Caco-2 (cell line): ENCODE measurements at regions of chr16 and their contacts with region 1.

Region 1: DNA sequence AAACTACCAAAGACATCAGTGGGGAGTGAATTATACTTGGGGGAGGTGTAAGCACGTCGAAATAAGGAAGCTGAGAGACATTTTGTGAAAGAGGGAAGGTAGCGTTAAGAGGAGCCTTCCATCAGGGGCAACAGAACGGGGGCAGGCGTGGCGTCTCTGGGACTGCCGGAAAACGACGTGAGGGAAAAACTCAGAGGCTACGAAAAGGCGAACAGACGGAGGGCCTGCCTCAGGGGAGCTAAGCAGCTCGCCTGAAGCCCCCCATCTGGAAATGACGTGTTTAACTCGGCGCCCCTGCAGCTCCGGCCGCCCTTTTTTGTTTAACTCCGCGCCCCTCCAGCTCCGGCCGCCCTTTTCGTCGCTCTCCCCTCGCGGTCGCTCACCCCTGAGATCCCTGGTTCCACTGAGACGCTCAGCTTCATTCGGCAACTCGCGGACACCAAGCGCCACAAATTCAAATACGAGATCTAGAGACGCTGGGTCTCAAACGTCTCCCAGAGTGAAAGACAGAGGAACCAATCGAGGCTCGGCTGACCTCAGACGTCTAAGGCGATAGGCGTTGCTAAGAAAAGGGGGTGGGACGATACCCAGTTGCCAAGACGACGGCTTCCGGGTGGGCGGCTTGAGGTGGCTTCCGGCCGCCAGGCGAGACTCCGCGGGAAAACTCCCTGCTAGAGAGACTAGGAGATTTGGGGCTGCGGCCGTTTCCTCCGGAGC is 383.3 kb downstream of the ZFHX3 start:
- DNase-seq: peak; percentile 97 to 99
- H3K4me3 ChIP-seq: peak overlapping the region; percentile 88
- H3K4me3 Mint-ChIP-seq: peak overlapping the region; percentile 89
- H3K27ac Mint-ChIP-seq: peak overlapping the region; percentile 96
- H3K4me1 ChIP-seq: no peaks in the 10 kb centered on the region
- H3K4me1 Mint-ChIP-seq: no peaks in the 10 kb centered on the region
- H3K27me3 ChIP-seq: no peaks in the 10 kb centered on the region
- H3K27me3 Mint-ChIP-seq: no peaks in the 10 kb centered on the region
- CTCF ChIP-seq: no peak

Region 2: GRCh38 chr16:71781741-71782140 is 882.9 kb before region 1 on chr16:
- CTCF ChIA-PET with region 1: no interaction called
- POLR2A ChIA-PET with region 1: no interaction called
- intact Hi-C with region 1: no loop called
- DNase-seq: no peak
- H3K4me3 ChIP-seq: no peak overlapping the region
- H3K4me3 Mint-ChIP-seq: no peak overlapping the region
- H3K27ac Mint-ChIP-seq: peak overlapping the region; percentile 55
- H3K4me1 ChIP-seq: peaks cover 10% of the 10 kb centered on the region
- H3K4me1 Mint-ChIP-seq: peaks cover 10% of the 10 kb centered on the region
- H3K27me3 ChIP-seq: no peaks in the 10 kb centered on the region
- H3K27me3 Mint-ChIP-seq: no peaks in the 10 kb centered on the region
- CTCF ChIP-seq: no peak

Region 3: GRCh38 chr16:72560617-72561016 is 104.0 kb before region 1 on chr16:
- CTCF ChIA-PET with region 1: no interaction called
- POLR2A ChIA-PET with region 1: no interaction called
- intact Hi-C with region 1: loop called (anchors 10 kb)
- DNase-seq: no peak
- H3K4me3 ChIP-seq: no peak overlapping the region
- H3K4me3 Mint-ChIP-seq: no peak overlapping the region
- H3K27ac Mint-ChIP-seq: no peak overlapping the region
- H3K4me1 ChIP-seq: 0 out of 2 replicates have a peak, but pooled peaks cover 6% of the 10 kb centered on the region
- H3K4me1 Mint-ChIP-seq: no peaks in the 10 kb centered on the region
- H3K27me3 ChIP-seq: no peaks in the 10 kb centered on the region
- H3K27me3 Mint-ChIP-seq: no peaks in the 10 kb centered on the region
- CTCF ChIP-seq: no peak

Region 4: DNA sequence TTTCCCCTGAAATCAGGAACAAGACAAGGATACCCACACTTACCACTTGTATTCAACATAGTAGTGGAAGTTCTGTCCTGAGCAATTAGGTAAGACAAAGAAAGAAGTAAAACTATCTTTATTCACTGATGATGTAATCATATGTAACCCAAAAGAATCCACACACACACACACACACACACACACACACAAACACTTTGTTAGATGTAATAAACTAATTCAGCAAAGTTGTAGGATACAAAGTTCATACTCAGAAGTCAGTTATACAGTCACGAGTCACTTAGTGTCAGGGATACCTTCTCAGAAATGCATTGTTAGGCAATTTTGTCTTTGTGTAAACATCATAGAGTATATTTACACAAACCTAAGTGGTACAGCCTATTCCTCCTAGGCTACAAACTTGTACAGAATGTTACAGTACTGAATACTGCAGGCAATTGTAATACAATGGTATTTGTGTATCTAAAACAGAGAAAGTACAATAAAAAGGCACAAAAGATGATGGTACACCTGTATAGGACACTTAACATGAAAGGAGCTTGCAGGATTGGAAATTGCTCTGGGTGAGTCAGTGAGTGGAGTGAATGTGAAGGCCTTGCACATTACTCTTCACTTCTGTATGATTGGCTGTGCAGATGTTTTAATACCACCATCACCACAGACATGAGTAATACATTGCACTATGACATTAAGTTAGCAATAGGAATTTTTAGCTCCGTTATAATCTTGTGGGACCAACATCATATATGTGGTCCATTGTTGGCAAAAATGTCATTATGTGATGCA is 13.2 kb after region 1 on chr16:
- CTCF ChIA-PET with region 1: no interaction called
- POLR2A ChIA-PET with region 1: no interaction called
- intact Hi-C with region 1: no loop called
- DNase-seq: peak; percentile 46 to 67
- H3K4me3 ChIP-seq: no peak overlapping the region
- H3K4me3 Mint-ChIP-seq: no peak overlapping the region
- H3K27ac Mint-ChIP-seq: peak overlapping the region; percentile 14
- H3K4me1 ChIP-seq: peaks cover 9% of the 10 kb centered on the region
- H3K4me1 Mint-ChIP-seq: peaks cover 6% of the 10 kb centered on the region
- H3K27me3 ChIP-seq: no peaks in the 10 kb centered on the region
- H3K27me3 Mint-ChIP-seq: no peaks in the 10 kb centered on the region
- CTCF ChIP-seq: no peak

Region 5: DNA sequence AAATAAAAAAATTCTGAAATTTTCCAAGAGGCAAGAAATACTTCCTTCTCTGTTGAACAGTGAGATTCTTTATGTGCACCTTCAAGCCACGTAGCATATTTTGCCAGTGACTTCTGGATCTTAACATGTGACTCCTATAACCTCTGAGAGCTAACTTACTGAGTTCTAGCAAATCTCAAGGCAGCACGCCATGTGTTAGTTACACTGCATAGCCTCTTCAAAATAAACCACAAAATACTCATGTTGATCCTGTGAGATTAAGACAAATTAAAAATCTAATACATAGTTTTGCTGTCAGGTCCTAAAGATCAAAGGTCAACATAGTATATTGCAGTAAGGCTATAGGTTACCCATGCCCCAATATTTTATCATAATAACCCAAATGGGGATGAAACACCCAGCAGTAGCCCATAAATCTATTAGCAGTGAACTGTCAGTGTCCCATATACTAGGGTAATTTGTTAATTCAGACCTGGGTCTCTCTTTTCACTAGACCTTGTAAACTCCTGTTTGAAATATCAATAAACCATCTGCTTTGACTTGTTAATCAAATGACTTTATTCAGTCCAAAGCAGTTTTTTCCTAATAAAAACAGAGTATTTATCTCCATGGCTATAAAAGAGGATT is 40.2 kb after region 1 on chr16:
- CTCF ChIA-PET with region 1: no interaction called
- POLR2A ChIA-PET with region 1: no interaction called
- intact Hi-C with region 1: no loop called
- DNase-seq: no peak
- H3K4me3 ChIP-seq: no peak overlapping the region
- H3K4me3 Mint-ChIP-seq: no peak overlapping the region
- H3K27ac Mint-ChIP-seq: no peak overlapping the region
- H3K4me1 ChIP-seq: no peaks in the 10 kb centered on the region
- H3K4me1 Mint-ChIP-seq: no peaks in the 10 kb centered on the region
- H3K27me3 ChIP-seq: no peaks in the 10 kb centered on the region
- H3K27me3 Mint-ChIP-seq: no peaks in the 10 kb centered on the region
- CTCF ChIP-seq: no peak